Posterior cingulate gyrus (tissue), 11 donors: ENCODE measurements at regions of chr10 and their contacts with region 1.

Region 1: DNA sequence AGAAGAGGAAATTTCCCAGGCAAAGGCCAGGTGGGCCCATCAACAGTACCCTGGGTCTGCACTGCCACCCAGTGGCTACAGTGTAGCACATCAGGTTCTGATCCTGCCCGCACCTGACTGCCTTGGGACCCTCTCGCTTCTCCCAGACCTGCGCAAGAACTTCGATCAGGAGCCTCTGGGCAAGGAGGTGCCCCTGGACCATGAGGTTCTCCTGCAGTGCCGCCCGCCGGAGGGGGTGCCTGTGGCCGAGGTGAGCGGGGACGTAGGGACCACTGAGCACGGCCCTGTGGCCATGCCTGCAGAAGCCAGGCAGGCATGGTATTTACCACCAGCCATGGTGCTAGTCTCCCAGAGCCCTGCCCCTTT is 33.9 kb upstream of the SLC29A3 start:
- DNase-seq: peak in 8 of 10 donors; percentile 57 to 94 (median 68)

Region 2: DNA sequence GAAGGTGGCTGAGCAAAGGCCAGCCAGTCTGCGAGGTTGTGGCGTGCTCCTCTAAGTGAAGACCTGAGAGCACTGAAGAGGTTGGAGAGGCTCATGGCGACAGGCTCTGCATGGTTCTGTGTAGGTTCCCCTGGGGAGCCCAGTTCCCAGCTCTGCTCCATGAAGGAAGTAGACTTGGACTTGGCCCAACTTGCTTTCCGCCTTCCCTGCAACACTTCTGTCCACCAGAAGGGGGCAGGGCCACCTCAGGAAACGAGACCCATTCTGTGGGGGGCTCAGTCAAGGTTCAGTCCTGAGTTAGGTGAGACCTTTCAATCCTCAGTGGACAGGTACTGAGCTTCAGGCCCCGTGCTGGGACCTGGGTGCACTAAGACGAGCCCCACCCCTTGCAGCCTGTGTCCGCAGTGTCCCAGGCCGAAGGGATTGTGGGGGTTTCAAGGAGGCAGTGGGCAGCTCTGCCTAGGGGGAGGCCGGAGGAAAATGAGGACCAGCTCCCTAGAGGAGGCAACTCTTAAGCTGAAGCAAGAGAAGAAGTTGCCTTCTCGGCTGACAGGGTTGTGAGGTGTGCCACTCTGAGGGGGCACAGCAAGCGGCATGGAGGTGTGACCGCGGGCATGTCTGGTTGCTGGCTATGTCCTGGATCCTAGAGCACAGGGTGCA is 381.8 kb before region 1 on chr10:
- intact Hi-C with region 1: loop called (anchors 1 kb)
- DNase-seq: peak in 9 of 10 donors; percentile 47 to 93 (median 69)

Region 3: GRCh38 chr10:70925377-70926225 is 359.6 kb before region 1 on chr10:
- intact Hi-C with region 1: loop called (anchors 2 kb)
- DNase-seq: peak in 7 of 10 donors; percentile 36 to 93 (median 62)